ENCODE measurements at regions of chr17 and their contacts with region 1.

Region 1: DNA sequence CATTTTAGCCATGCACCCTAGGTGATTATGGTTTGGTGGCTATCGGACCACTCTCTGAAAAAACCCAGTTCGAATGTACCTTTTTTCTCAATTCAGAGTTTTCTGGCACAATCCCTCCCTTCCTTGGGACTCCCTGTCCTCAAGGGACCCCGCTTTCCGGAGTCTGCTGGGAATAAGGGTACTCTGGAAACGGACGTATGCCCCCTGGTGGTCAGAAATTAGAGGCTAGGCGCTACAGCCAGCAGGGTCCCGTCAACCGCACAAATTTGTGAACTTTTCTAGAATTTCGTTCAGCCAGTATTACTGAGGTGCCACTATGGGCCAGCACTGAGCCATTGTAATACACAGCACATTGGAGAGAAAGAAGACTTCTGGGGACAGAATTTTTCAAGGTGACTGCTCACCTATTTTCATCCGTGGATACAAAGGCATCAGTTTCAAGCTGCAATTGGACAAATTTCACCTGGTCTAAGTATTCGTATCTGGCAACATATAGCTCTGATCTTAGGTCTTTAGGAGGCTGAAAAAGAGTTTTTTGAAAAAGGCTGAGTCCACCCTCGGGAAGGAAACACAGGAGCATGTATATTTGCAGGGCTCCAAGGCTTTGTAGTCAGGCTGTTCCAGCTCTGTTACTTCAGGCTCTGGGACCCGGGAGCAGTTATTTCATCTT is 27.1 kb upstream of the CRYBA1 start:
- H3K4me3 ChIP-seq: no peak overlapping the region
- H3K27ac ChIP-seq: no peak overlapping the region
- H3K4me1 ChIP-seq: no peaks in the 10 kb centered on the region
- CTCF ChIP-seq: peak; percentile 94

Region 2: GRCh38 chr17:29124117-29124924 is 95.2 kb before region 1 on chr17:
- CTCF ChIA-PET with region 1: interaction called, 42 read pairs
- POLR2A ChIA-PET with region 1: no interaction called
- H3K4me3 ChIP-seq: no peak overlapping the region
- H3K27ac ChIP-seq: no peak overlapping the region
- H3K4me1 ChIP-seq: no peaks in the 10 kb centered on the region
- CTCF ChIP-seq: peak; percentile 69

Region 3: DNA sequence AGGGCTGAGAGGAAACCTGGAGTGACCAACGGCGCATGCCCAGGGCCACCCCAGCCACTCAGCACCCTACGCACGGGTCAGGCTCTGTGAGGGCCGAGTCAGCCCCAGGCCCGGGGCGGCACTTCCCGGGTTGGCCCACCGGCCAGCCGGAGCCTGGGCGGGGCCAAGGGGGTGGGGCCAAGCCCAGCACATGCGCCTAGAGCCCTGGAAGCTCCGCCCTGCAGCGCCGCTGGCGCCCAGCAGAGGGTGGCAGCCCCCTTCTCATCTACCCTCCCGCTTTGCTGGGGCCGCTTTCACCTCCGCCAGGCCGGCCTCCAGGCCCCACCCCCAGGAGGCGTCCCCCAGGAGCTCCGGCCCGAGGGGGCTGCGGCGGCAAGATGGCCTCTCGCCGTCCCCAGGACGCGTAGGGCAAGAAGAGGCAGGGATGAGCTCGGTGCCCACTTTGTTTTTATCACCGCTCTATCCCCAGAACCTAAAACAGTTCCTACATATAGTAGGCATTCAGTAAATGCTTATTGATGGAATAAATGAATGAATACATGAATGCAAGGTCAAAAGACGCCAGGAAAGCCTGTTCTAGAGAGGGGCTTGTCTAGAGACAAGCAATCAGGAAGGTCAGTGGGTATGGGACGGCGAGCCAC is 70.6 kb before region 1 on chr17:
- CTCF ChIA-PET with region 1: interaction called, 235 read pairs
- POLR2A ChIA-PET with region 1: interaction called, 18 read pairs
- H3K4me3 ChIP-seq: peak overlapping the region; percentile 44
- H3K27ac ChIP-seq: peak overlapping the region; percentile 48
- H3K4me1 ChIP-seq: peaks cover 10% of the 10 kb centered on the region
- CTCF ChIP-seq: peak; percentile 97

Region 4: DNA sequence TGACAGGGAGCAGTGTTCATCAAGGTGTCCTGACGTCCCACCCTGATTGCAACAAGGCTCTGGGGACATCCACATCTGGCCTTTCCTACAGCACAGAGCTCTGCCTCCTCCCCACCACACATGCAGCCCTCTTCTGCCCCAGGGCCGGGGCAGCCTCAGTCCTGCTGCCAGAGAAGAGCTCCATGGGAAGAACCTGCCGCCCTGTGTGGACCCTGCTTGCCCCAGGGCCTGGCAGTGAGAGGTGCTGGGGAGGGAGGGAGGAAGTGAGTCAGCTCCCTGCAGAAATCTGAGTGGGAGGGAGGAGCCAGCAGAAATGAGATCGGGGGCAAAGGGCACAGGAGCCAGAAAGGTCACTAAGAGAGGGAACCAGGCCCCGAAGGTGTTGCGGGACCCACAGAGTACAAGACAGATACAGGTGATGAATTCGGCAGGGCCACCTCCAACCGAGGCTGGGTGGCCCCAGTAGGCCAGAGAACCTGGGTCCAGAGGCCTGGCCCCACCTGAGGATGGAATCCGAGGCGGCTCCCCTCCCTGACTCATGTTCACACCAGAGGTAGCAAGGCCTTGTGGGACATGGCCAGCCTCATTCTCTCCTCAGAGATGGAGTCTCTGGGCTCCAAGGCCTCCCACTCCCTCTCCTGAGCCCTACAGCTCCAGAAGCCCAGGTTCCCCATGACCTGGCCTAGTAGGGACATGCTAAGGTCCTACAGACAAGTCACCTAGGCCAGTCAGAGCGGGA is 64.1 kb before region 1 on chr17:
- CTCF ChIA-PET with region 1: interaction called, 235 read pairs
- POLR2A ChIA-PET with region 1: no interaction called
- H3K4me3 ChIP-seq: no peak overlapping the region
- H3K27ac ChIP-seq: no peak overlapping the region
- H3K4me1 ChIP-seq: peaks cover 10% of the 10 kb centered on the region
- CTCF ChIP-seq: no peak

Region 5: GRCh38 chr17:29195465-29196081 is 23.9 kb before region 1 on chr17:
- CTCF ChIA-PET with region 1: interaction called, 87 read pairs
- POLR2A ChIA-PET with region 1: no interaction called
- H3K4me3 ChIP-seq: no peak overlapping the region
- H3K27ac ChIP-seq: no peak overlapping the region
- H3K4me1 ChIP-seq: no peaks in the 10 kb centered on the region
- CTCF ChIP-seq: no peak

Region 6: GRCh38 chr17:29241015-29241963 is 21.8 kb after region 1 on chr17:
- CTCF ChIA-PET with region 1: interaction called, 47 read pairs
- POLR2A ChIA-PET with region 1: no interaction called
- H3K4me3 ChIP-seq: no peak overlapping the region
- H3K27ac ChIP-seq: peak overlapping the region; percentile 22; the same call in 1 of the 2 replicates
- H3K4me1 ChIP-seq: no peaks in the 10 kb centered on the region
- CTCF ChIP-seq: no peak

Region 7: DNA sequence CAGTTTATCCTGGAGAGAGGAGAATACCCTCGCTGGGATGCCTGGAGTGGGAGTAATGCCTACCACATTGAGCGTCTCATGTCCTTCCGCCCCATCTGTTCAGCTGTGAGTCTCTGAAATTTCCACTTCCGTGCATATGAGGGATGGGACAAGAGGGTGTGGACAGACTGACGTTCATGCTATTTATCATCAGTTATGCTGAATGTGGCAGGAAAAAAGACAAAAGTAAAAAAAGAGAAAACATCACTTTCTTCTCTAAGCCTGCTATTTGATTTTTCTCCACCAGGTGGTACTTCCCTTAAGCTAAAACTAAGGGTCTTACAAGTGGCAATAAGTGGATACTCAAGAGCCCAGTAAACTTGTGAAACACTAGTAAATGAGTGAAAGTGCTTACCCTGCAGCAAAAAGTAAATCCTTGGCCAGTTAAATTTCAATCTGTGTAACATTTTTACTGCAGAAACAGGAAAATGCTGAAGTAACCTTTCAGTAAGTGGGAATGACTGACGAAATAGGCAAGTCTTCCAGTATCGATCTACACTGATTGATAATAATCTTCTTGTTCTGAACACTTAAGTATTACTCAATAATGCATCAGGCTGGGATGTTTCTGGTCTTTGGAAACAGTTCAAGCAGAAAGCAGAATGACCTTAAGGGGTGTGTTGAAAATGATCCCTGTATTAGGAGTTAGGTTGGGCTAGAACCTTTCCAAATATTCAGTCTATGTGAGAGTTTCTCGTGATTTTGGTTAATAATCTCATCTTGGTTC is 32.8 kb after region 1 on chr17:
- CTCF ChIA-PET with region 1: interaction called, 29 read pairs
- POLR2A ChIA-PET with region 1: no interaction called
- H3K4me3 ChIP-seq: no peak overlapping the region
- H3K27ac ChIP-seq: no peak overlapping the region
- H3K4me1 ChIP-seq: peaks cover 3% of the 10 kb centered on the region; the same call in 1 of the 2 replicates
- CTCF ChIP-seq: no peak

Measured in HEK293 (cell line).